Psoas muscle (tissue), 8 donors: ENCODE measurements at regions of chr5 and their contacts with region 1.

Region 1: DNA sequence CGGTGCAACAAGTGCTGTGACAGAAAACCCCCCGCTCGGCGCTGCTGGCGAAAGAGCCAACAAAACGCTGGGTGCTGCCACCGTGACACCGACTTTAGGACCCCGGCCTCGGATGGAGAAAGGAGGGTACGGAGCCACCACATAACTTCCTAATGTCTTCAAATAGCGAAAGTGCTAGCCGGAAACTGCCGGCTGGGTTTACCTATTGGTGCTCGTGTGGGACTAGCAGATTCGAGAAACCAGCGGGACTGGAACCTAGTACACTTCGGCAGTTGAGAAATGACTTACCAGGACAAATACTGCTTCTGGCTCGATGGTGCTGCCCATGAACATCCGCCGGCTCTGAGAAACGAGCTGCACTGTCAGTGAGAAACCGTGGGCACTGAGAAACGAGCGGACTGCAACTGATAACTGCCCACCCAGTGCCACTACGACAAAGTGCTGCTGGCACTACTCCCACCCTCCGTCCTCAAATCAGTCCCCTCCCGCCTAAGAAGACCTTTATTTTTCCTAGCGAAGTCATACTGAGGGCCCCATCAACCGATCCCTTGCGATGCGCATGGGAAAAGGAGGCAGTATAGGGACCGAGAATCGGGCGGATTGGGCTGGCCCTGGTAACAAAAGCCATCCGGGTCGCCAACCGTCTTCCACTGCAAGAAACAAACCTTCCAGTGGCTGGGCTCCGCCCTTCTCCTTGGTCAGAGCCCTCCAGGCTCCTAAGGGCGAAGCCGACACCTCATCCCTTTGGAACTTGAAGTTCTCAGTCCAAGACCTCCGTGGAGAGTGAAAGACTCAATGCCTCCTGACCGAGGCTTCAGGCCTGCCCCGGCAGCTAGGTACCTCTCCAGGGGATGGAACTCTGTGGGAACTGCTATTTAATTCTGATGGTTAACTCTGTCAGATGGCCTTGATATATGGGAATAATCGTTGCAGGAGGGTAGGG is 27.0 kb upstream of the ANXA2R start:
- DNase-seq: peak; percentile 88 to 93
- ATAC-seq: peak; percentile 70 to 75 (median 73)
- H3K4me3 ChIP-seq: peak overlapping the region; percentile 94
- H3K27ac ChIP-seq: peak overlapping the region; percentile 100
- H3K4me1 ChIP-seq: peaks cover 19% of the 10 kb centered on the region
- H3K27me3 ChIP-seq: no peaks in the 10 kb centered on the region
- CTCF ChIP-seq: no peak

Region 2: GRCh38 chr5:43049236-43049635 is 17.8 kb before region 1 on chr5:
- intact Hi-C with region 1: loop called in 1 of 2 experiments (anchors 2 kb)
- DNase-seq: no peak
- ATAC-seq: peak in 1 of 4 donors; percentile 26
- H3K4me3 ChIP-seq: no peak overlapping the region
- H3K27ac ChIP-seq: peak overlapping the region; percentile 34
- H3K4me1 ChIP-seq: peaks cover 32% of the 10 kb centered on the region
- H3K27me3 ChIP-seq: no peaks in the 10 kb centered on the region
- CTCF ChIP-seq: no peak

Region 3: GRCh38 chr5:43120720-43121564 is 53.9 kb after region 1 on chr5 and contains the start of gene ZNF131:
- intact Hi-C with region 1: loop called in 1 of 2 experiments (anchors 2 kb)
- DNase-seq: peak; percentile 97 to 98
- ATAC-seq: peak; percentile 94 to 98 (median 94)
- H3K4me3 ChIP-seq: peak within 1 kb of the TSS; percentile 85
- H3K27ac ChIP-seq: peak within 1 kb of the TSS; percentile 99
- H3K4me1 ChIP-seq: peaks cover 47% of the 10 kb centered on the region
- H3K27me3 ChIP-seq: no peaks in the 10 kb centered on the region
- CTCF ChIP-seq: no peak
- total RNA-seq, gene ZNF131: 16.7 to 23.7 (median 18.7) TPM

Region 4: DNA sequence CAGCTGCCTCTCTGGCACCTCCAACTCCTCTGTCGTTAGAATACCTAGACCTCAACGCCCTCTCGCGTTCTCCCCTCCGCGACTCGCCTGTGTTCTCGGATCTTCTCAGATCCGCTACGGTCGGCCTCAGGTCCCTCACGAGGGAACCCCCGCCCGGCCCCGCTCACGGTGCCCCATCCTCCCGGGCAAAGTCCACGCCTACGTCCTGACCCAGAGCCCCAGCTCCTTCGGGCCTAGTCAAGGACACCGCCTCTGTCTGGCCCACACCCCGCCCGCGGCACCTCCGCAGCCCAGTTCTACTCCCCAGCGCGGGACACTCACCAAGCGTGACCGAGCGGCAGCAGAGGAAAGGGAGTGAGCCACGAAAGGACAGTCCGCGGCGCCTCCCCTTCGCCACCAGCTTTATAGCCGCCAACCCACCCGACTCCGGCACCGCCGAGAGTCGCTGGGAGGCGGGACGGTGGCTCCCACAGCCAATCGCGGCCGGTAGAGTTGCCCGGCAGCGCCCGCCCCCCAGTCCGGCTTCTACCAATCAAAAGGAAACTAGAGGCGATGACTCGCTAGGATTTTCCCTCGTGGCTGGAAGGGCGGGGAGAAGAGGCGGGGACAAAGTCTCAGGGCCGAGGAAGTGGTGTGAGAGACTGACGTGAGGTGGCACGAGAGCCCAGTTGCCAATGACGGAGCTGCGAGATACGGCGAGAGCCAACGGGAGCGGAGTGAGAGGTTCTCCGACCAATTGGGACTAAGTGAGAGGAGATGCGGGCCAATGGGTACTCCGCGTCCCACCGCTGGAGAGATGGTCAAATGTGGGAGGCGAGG is 246.2 kb after region 1 on chr5 and contains the start of gene HMGCS1:
- intact Hi-C with region 1: loop called (anchors 1 to 5 kb)
- DNase-seq: peak; percentile 98 to 99
- ATAC-seq: peak; percentile 98 to 99 (median 98)
- H3K4me3 ChIP-seq: peak within 1 kb of the TSS; percentile 96
- H3K27ac ChIP-seq: peak within 1 kb of the TSS; percentile 91
- H3K4me1 ChIP-seq: peaks cover 11% of the 10 kb centered on the region
- H3K27me3 ChIP-seq: no peaks in the 10 kb centered on the region
- CTCF ChIP-seq: no peak
- total RNA-seq, gene HMGCS1: 14.7 to 22.6 (median 17.9) TPM